ENCODE measurements at regions of chr6 and their contacts with region 1.

Region 1: DNA sequence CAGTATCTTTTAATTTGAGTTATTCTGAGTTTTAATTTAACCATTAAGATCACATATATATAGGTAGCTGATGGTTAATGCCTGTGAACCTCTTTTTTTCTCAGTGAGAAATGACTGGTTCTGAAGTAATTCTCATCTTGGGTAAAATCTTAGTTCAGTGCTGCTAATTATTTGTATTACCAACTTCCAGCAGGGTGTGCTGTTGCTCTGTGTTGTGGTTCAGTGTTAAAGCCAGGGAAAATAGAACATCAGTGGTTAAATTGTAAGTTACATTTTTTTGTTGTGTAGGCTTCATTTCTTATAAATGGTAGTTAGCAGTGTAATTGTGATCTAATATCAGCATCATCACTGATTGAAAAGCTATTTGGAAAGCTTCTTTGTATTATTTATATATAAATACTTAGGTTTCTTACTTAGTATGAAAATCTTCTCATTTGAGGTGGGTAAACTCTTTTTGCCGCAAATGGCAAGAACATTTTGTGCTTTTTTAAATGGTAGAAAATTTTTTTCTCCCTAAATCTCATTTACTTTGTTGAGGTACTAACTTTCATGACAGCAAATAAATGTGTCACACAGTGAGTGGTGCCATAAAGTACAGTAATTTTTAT is 43.7 kb downstream of the CDC5L start:
- DNase-seq: peak; percentile 42
- CTCF ChIP-seq: peak; percentile 72

Region 2: DNA sequence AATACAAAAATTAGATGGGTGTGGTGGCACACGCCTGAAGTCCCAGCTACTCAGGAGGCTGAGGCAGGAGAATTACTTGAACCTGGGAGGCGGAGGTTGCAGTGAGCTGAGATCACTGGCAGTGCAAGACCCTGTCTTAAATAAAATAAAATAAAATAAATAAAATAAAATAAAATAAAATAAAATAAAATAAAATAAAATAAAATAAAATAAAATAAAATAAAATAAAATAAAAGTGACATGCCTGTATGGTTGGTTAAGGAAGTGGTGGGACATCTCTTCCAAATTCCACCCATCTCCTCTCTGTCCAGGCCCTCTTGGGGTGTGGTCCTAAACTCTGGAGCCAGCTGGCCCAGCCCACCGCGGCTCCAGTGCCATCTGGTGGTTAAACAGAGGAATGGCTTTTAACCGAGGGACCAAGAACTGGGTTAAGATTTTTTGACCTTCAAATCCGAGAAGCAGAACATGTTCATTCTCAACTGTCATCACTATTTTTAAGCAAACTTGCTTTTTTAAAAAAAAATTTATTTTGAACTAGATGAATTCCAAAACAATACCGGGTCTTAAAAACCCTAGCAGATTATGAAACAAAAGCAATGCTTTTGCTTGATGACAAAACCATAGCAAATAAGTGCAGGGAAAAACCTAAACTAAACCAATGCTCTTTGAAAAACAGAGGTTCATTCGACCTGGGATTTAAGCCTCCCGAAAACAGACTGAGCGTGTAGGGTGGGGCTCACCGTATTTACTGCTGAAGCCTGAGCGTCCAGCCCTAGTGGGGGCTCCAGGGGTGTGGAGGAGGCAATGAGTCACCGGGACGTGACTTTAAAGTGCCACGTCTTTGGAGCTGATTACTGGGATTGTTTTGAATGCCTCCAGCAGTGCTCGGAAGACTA is 25.1 kb after region 1 on chr6:
- CTCF ChIA-PET with region 1: interaction called, 190 read pairs
- POLR2A ChIA-PET with region 1: no interaction called
- DNase-seq: peak; percentile 78
- CTCF ChIP-seq: peak; percentile 70